ENCODE measurements at regions of chr5 and their contacts with region 1.

Region 1: DNA sequence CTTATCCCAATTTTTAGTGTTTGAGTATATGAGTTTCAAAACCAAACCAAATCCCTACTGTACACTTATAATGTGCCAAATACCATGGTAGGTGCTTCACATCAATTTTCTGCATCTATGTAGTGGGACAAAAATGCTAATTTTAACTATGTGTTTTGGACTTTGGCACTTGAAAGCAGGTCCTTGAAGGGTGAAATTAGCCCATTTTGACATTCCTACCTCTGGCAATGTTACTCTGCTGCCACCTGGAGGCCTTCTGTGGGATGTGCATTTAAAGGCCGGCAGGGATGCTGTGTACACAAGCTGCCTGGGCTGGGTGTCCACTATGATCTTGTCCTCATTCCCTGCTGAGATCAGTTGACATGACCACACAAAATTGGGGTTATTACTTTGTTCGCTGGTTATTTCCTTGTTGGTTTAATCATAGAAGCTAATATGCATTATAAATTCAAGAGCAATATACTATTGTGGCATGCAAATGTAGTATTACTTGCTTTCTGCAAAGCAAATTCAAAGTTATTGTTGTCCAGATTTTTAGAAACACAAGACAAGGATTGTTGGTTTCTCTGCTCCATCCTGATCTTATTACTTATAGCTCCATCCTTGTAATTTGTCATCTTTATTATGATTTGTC is 166.8 kb downstream of the ARHGEF28 start:
- DNase-seq: peak; percentile 85
- H3K4me3 ChIP-seq: no peak overlapping the region
- H3K27ac ChIP-seq: no peak overlapping the region
- H3K4me1 ChIP-seq: peaks cover 54% of the 10 kb centered on the region
- H3K27me3 ChIP-seq: no peaks in the 10 kb centered on the region
- CTCF ChIP-seq: peak; percentile 85 to 95
- POLR2A ChIP-seq: no peak

Region 2: GRCh38 chr5:73596705-73597328 is 196.0 kb before region 1 on chr5:
- CTCF ChIA-PET with region 1: interaction called, 232 read pairs
- POLR2A ChIA-PET with region 1: no interaction called
- dilution Hi-C with region 1: no loop called
- intact Hi-C with region 1: no loop called
- DNase-seq: peak; percentile 39
- H3K4me3 ChIP-seq: no peak overlapping the region
- H3K27ac ChIP-seq: no peak overlapping the region
- H3K4me1 ChIP-seq: peaks cover 12% of the 10 kb centered on the region
- H3K27me3 ChIP-seq: no peaks in the 10 kb centered on the region
- CTCF ChIP-seq: peak; percentile 61 to 67
- POLR2A ChIP-seq: no peak

Region 3: DNA sequence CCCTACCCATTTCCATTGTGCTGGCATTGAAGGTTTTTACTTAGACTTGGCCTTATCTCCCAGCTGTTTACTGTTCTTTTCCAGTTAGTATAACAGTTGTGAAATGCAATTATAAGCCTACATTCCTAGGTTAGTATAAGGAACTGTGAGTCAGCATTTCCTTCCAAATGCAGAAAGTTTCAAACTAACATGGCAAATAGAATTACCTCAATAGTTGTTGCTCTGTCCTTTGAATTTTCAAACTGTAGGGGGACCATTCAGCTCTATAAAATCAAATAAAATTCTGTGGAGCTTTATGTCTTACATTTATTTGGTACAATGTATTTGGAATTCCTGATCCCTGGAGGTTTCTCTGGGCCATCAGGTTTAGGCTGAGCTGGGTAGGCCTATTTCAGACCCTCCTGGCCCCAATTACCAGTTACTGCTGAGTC is 119.6 kb before region 1 on chr5:
- CTCF ChIA-PET with region 1: interaction called, 12 read pairs
- POLR2A ChIA-PET with region 1: no interaction called
- dilution Hi-C with region 1: no loop called
- intact Hi-C with region 1: no loop called
- DNase-seq: peak; percentile 91
- H3K4me3 ChIP-seq: no peak overlapping the region
- H3K27ac ChIP-seq: peak overlapping the region; percentile 74
- H3K4me1 ChIP-seq: peaks cover 33% of the 10 kb centered on the region
- H3K27me3 ChIP-seq: no peaks in the 10 kb centered on the region
- CTCF ChIP-seq: peak in 1 of 2 donors; percentile 6
- POLR2A ChIP-seq: no peak

Region 4: GRCh38 chr5:73748510-73749400 is 44.0 kb before region 1 on chr5:
- CTCF ChIA-PET with region 1: interaction called, 17 read pairs
- POLR2A ChIA-PET with region 1: no interaction called
- dilution Hi-C with region 1: no loop called
- intact Hi-C with region 1: loop called (anchors 5 kb)
- DNase-seq: peak; percentile 89
- H3K4me3 ChIP-seq: peak overlapping the region in 1 of 3 experiments; percentile 42
- H3K27ac ChIP-seq: peak overlapping the region; percentile 48
- H3K4me1 ChIP-seq: peaks cover 68% of the 10 kb centered on the region
- H3K27me3 ChIP-seq: no peaks in the 10 kb centered on the region
- CTCF ChIP-seq: no peak
- POLR2A ChIP-seq: no peak